Sigmoid colon (tissue), 7 donors: ENCODE measurements at regions of chr19 and their contacts with region 1.

Region 1: GRCh38 chr19:9584073-9584833 is at the start of gene ZNF121:
- DNase-seq: peak; percentile 89
- H3K4me3 ChIP-seq: peak within 1 kb of the TSS; percentile 68 to 76 (median 70)
- H3K27ac ChIP-seq: peak within 1 kb of the TSS; percentile 88 to 92 (median 90)
- H3K4me1 ChIP-seq: peaks cover 0 to 22% (median 17%) of the 10 kb centered on the region in 4 donors
- H3K27me3 ChIP-seq: peaks cover 0 to 5% (median 0%) of the 10 kb centered on the region in 3 donors
- CTCF ChIP-seq: no peak
- EP300 ChIP-seq: no peak
- POLR2A ChIP-seq: peak in 1 of 2 donors; percentile 34
- total RNA-seq, gene ZNF121: 18.3 to 28.6 (median 23.7) TPM

Region 2: GRCh38 chr19:9309139-9309973 is 274.9 kb before region 1 on chr19 and contains the start of gene ZNF699:
- intact Hi-C with region 1: loop called (anchors 5 kb)
- DNase-seq: peak; percentile 99
- H3K4me3 ChIP-seq: peak within 1 kb of the TSS; percentile 68 to 94 (median 84)
- H3K27ac ChIP-seq: peak within 1 kb of the TSS; percentile 91 to 98 (median 96)
- H3K4me1 ChIP-seq: peaks cover 0 to 21% (median 13%) of the 10 kb centered on the region in 4 donors
- H3K27me3 ChIP-seq: no peaks in the 10 kb centered on the region
- CTCF ChIP-seq: no peak
- EP300 ChIP-seq: peak in 1 of 4 donors; percentile 4
- POLR2A ChIP-seq: peak; percentile 33 to 63
- total RNA-seq, gene ZNF699: 3.1 to 23.7 (median 11.9) TPM

Region 3: DNA sequence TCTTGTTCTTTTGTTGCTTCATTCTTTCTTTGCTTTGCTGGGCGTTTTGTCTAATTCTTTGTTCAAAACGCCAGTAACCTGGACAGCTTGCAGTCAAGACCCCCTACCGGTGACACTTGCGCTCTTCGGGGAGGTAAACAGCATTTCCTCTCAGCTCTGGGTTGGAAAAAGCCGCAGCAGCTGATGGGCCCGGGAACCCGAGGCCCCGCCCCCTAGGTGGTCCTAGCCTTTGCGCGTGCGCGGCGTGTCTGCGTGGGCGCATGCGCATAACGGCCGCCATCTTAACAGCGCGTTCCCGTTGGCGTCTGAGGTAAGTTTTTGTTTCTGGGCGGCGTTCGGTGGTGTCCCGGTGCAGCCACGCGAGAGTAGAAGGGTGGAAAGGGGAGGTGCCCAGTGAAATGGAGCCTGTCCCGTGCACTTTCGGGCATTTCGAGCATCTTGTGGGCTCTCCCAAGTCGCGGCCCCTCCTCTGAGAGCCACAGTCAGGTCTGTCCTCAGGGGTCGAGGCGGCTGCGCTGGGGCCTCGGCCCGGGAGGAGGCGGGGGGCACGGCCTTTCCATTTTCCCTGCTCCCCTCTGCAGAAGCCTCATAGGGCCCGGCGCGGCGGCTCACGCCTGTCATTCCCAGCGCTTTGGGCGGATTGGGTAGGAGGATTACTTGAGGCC is 260.2 kb before region 1 on chr19 and contains the start of gene ZNF559:
- intact Hi-C with region 1: loop called (anchors 5 kb)
- DNase-seq: peak; percentile 97
- H3K4me3 ChIP-seq: peak within 1 kb of the TSS; percentile 70 to 83 (median 76)
- H3K27ac ChIP-seq: peak within 1 kb of the TSS; percentile 88 to 94 (median 92)
- H3K4me1 ChIP-seq: peaks cover 0 to 7% (median 7%) of the 10 kb centered on the region in 4 donors
- H3K27me3 ChIP-seq: no peaks in the 10 kb centered on the region
- CTCF ChIP-seq: no peak
- EP300 ChIP-seq: no peak
- POLR2A ChIP-seq: peak in 1 of 2 donors; percentile 27
- total RNA-seq, gene ZNF559: 16.5 to 45.7 (median 23.9) TPM

Region 4: GRCh38 chr19:9538183-9539058 is 45.8 kb before region 1 on chr19 and contains the start of gene ZNF426:
- intact Hi-C with region 1: loop called (anchors 5 kb)
- DNase-seq: peak; percentile 93
- H3K4me3 ChIP-seq: peak within 1 kb of the TSS; percentile 54 to 76 (median 72)
- H3K27ac ChIP-seq: peak within 1 kb of the TSS; percentile 91 to 95 (median 92)
- H3K4me1 ChIP-seq: peaks cover 0 to 18% (median 10%) of the 10 kb centered on the region in 4 donors
- H3K27me3 ChIP-seq: no peaks in the 10 kb centered on the region
- CTCF ChIP-seq: no peak
- EP300 ChIP-seq: no peak
- POLR2A ChIP-seq: peak in 1 of 2 donors; percentile 5
- total RNA-seq, gene ZNF426: 11.4 to 18.1 (median 12.7) TPM

Region 5: GRCh38 chr19:9621156-9622037 is 37.1 kb after region 1 on chr19 and contains the start of gene ZNF561:
- intact Hi-C with region 1: loop called (anchors 2 kb)
- DNase-seq: peak; percentile 90
- H3K4me3 ChIP-seq: peak within 1 kb of the TSS; percentile 73 to 88 (median 76)
- H3K27ac ChIP-seq: peak within 1 kb of the TSS; percentile 87 to 91 (median 90)
- H3K4me1 ChIP-seq: peaks cover 0 to 49% (median 35%) of the 10 kb centered on the region in 4 donors
- H3K27me3 ChIP-seq: no peaks in the 10 kb centered on the region
- CTCF ChIP-seq: no peak
- EP300 ChIP-seq: no peak
- POLR2A ChIP-seq: no peak
- total RNA-seq, gene ZNF561: 30.3 to 41.3 (median 31.5) TPM